ENCODE measurements at regions of chr20 and their contacts with region 1.

Region 1: GRCh38 chr20:12722096-12722495 is 286.7 kb upstream of the SPTLC3 start:
- DNase-seq: no peak
- H3K4me3 ChIP-seq: no peak overlapping the region
- H3K27ac ChIP-seq: no peak overlapping the region
- H3K4me1 ChIP-seq: no peaks in the 10 kb centered on the region
- H3K27me3 ChIP-seq: no peaks in the 10 kb centered on the region
- CTCF ChIP-seq: no peak

Region 2: GRCh38 chr20:12762725-12763124 is 40.6 kb after region 1 on chr20:
- intact Hi-C with region 1: loop called (anchors 5 kb)
- DNase-seq: peak in 1 of 2 donors; percentile 64
- H3K4me3 ChIP-seq: peak overlapping the region in 1 of 2 donors; percentile 36
- H3K27ac ChIP-seq: peak overlapping the region; percentile 22 to 48
- H3K4me1 ChIP-seq: peaks cover 0 to 2% of the 10 kb centered on the region in 2 donors
- H3K27me3 ChIP-seq: no peaks in the 10 kb centered on the region
- CTCF ChIP-seq: no peak